ENCODE measurements at regions of chr2 and their contacts with region 1.

Region 1: DNA sequence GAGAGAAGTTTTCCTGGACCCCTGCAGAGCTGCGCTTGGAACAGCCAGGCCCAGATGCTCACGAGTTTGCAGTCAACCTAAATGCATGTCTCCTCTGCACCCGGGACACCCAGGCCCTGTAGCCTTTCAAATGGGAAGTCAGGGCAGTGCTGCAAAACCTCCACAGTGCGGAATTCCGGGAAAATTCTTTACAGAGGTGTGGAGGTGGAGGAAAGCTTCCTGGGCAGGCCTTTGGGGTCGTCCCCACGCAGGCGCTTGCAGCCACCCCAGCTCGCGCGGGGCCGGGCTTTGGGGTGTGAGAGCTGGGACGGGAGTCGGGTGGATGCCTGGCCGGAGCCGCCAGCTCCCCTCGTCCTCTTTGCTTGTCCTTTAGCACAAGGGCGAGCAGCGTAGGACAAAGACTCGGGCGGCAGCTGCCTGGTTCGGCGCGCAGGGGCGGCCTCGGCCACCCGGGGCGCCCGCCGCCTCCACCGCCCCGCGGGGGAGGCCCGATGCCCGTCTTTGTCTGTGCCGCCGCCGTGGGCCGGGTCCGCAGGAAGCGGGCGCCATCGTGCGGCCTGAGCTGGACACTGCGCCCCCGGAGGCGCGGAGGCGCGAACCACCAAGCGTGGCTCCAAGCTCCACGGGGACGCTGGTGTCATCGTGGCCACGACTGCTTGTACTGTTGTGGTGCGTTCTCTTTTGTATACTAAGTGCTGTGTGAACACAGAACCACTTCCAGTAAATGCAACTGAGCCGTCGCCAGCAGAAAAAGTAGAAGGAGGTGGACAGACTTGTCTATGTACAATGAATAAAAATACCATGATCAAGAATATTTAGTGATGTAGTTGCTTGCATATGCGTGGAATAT is 28.2 kb upstream of the BCL11A start:
- DNase-seq: peak; percentile 27
- ATAC-seq: peak; percentile 100
- H3K4me3 ChIP-seq: peak overlapping the region; percentile 9; the same call in 1 of the 2 replicates
- H3K27ac ChIP-seq: no peak overlapping the region
- H3K4me1 ChIP-seq: no peaks in the 10 kb centered on the region
- H3K27me3 ChIP-seq: peaks cover 12% of the 10 kb centered on the region
- CTCF ChIP-seq: peak; percentile 91
- POLR2A ChIP-seq: no peak
- RAD21 ChIP-seq: peak; percentile 92

Region 2: DNA sequence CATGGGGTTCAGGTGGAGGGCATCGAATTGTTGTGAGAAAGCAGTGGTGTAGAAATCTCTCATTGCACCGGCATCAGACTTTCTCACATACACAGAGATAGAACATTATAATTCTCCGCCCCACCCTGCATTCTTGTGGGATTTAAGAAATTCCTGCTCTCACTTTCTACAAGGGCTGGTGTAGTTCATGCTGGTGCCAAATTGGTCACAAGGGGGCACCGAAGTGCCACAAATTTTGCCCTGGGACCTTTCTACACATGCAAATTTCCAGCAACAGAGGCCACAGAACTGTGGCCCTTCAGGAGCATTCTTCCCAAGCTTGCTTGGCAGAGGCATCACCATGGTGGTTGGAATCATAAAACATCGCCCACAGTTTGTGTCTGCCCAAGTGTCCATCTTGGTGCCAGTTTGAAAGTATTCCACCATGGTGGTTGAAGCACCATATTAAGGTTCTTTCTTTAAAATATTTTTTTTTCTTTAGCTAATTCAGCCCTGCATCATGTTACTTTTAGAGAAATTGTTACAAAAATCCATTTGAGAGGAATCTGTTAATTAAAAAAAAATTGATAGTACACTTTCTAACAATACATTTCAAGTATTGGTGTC is 1819.4 kb before region 1 on chr2:
- CTCF ChIA-PET with region 1: no interaction called
- POLR2A ChIA-PET with region 1: no interaction called
- dilution Hi-C with region 1: no loop called
- in situ Hi-C with region 1: loop called (anchors 25 kb)
- intact Hi-C with region 1: loop called (anchors 1 kb)
- DNase-seq: peak; percentile 28
- ATAC-seq: peak; percentile 78
- H3K4me3 ChIP-seq: no peak overlapping the region
- H3K27ac ChIP-seq: no peak overlapping the region
- H3K4me1 ChIP-seq: no peaks in the 10 kb centered on the region
- H3K27me3 ChIP-seq: no peaks in the 10 kb centered on the region
- CTCF ChIP-seq: peak; percentile 64
- POLR2A ChIP-seq: no peak
- RAD21 ChIP-seq: peak; percentile 73

Region 3: DNA sequence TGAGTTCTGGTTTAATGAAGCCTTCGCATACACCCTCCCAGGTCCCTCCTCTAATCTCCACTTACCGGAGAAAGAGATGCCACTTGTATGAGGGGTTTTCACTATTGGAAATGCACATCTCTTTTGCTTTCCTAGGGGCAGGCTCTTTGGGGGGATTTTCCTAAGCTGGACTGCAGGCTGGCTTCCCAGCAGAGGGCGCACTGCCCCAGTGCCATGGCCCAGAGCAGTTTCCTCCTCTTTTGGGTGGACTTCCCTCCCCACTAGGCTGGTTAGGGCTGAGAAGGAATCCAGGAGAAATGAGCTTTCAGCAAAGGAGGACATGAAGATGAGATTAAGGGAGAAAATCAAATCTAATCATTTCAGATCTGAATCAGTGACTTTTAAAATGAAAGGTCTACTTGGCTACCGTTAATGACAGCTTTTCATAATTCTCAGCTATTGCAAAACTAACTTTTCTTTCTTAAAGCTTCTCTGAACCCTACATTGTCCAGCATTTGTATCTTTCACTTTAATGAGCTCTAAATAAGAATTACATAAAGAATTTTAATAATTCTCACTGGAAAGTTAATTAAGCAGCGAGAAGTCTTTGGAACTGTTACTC is 1556.4 kb before region 1 on chr2:
- CTCF ChIA-PET with region 1: interaction called, 7 read pairs
- POLR2A ChIA-PET with region 1: no interaction called
- dilution Hi-C with region 1: no loop called
- in situ Hi-C with region 1: no loop called
- intact Hi-C with region 1: loop called (anchors 1 kb)
- DNase-seq: peak; percentile 26
- ATAC-seq: peak; percentile 70
- H3K4me3 ChIP-seq: no peak overlapping the region
- H3K27ac ChIP-seq: no peak overlapping the region
- H3K4me1 ChIP-seq: no peaks in the 10 kb centered on the region
- H3K27me3 ChIP-seq: no peaks in the 10 kb centered on the region
- CTCF ChIP-seq: peak; percentile 59
- POLR2A ChIP-seq: no peak
- RAD21 ChIP-seq: peak; percentile 58

Region 4: GRCh38 chr2:59301466-59302402 is 1279.9 kb before region 1 on chr2:
- CTCF ChIA-PET with region 1: interaction called, 3 read pairs
- POLR2A ChIA-PET with region 1: no interaction called
- dilution Hi-C with region 1: no loop called
- in situ Hi-C with region 1: no loop called
- intact Hi-C with region 1: loop called (anchors 10 kb)
- DNase-seq: peak; percentile 70
- ATAC-seq: peak; percentile 48
- H3K4me3 ChIP-seq: no peak overlapping the region
- H3K27ac ChIP-seq: no peak overlapping the region
- H3K4me1 ChIP-seq: no peaks in the 10 kb centered on the region
- H3K27me3 ChIP-seq: no peaks in the 10 kb centered on the region
- CTCF ChIP-seq: peak; percentile 55
- POLR2A ChIP-seq: no peak
- RAD21 ChIP-seq: peak; percentile 53

Region 5: DNA sequence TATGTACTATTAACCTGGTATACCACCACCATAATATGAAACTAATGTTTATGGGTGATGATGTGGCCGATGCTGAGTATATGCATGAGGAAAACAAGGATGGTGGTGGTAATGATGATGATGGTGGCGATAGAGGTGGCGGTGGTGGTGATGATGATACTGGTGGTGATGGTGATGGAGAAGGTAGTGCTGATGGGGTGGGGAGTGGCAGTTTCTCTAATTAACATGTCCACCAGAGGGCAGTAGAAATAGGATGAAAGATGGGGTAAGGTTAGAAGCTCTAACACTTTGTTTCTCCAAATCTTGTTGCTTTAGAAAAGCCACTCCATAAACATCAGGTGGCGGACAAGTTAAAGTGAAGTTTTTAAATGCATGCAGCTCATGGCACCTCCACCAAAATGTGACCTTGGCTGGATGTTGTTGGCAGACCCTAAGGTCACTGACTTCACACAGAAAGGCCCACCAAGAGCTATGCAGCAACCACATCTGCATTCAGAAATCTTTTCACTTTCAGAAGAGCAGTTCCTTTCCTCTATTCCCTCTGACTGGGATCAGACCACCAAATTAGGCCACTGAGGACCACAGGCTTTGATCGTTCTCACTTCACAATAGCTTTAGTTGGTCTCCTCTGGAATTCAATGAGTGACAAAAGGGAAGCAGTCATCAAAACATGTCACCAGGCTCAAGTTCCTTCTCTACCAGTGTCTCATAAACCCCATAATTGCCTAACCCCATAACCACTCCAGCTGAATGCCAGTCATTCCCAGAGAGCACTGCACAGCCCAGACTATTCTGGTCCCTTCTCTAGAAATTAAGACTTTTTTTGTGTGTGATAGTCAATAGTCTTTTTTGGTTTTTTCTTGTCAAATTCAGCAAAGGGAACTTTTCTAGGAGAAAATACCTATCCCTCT is 20.7 kb before region 1 on chr2:
- CTCF ChIA-PET with region 1: interaction called, 23 read pairs
- POLR2A ChIA-PET with region 1: no interaction called
- dilution Hi-C with region 1: no loop called
- in situ Hi-C with region 1: no loop called
- intact Hi-C with region 1: loop called (anchors 1 kb)
- DNase-seq: no peak
- ATAC-seq: peak; percentile 65
- H3K4me3 ChIP-seq: no peak overlapping the region
- H3K27ac ChIP-seq: no peak overlapping the region
- H3K4me1 ChIP-seq: no peaks in the 10 kb centered on the region
- H3K27me3 ChIP-seq: peaks cover 22% of the 10 kb centered on the region
- CTCF ChIP-seq: peak; percentile 56
- POLR2A ChIP-seq: no peak
- RAD21 ChIP-seq: peak; percentile 41

Region 6: GRCh38 chr2:60569680-60570111 is 12.0 kb before region 1 on chr2:
- CTCF ChIA-PET with region 1: interaction called, 13 read pairs
- POLR2A ChIA-PET with region 1: no interaction called
- dilution Hi-C with region 1: no loop called
- in situ Hi-C with region 1: no loop called
- intact Hi-C with region 1: no loop called
- DNase-seq: no peak
- ATAC-seq: no peak
- H3K4me3 ChIP-seq: peak overlapping the region; percentile 32; the same call in 1 of the 2 replicates
- H3K27ac ChIP-seq: no peak overlapping the region
- H3K4me1 ChIP-seq: no peaks in the 10 kb centered on the region
- H3K27me3 ChIP-seq: peaks cover 27% of the 10 kb centered on the region
- CTCF ChIP-seq: no peak
- POLR2A ChIP-seq: no peak
- RAD21 ChIP-seq: no peak